B cell (primary cell): ENCODE measurements at regions of chr14 and their contacts with region 1.

Region 1: GRCh38 chr14:76151398-76152339 is at the start of gene GPATCH2L:
- DNase-seq: peak; percentile 96
- ATAC-seq: peak; percentile 95
- H3K4me3 ChIP-seq: peak within 1 kb of the TSS; percentile 62 to 96 (median 90)
- H3K4me3 Mint-ChIP-seq: peak within 1 kb of the TSS; percentile 98
- H3K27ac ChIP-seq: peak within 1 kb of the TSS; percentile 88 to 95
- H3K27ac Mint-ChIP-seq: peak within 1 kb of the TSS; percentile 97
- H3K4me1 ChIP-seq: peaks cover 30 to 31% of the 10 kb centered on the region in 2 donors
- H3K4me1 Mint-ChIP-seq: peaks cover 51% of the 10 kb centered on the region
- H3K27me3 ChIP-seq: no peaks in the 10 kb centered on the region
- H3K27me3 Mint-ChIP-seq: no peaks in the 10 kb centered on the region
- CTCF ChIP-seq: no peak
- total RNA-seq, gene GPATCH2L: 82.7 and 97.8 TPM in 2 replicates

Region 2: GRCh38 chr14:76109087-76109880 is 42.4 kb before region 1 on chr14:
- CTCF ChIA-PET with region 1: no interaction called
- POLR2A ChIA-PET with region 1: interaction called, 11 read pairs
- intact Hi-C with region 1: no loop called
- DNase-seq: no peak
- ATAC-seq: no peak
- H3K4me3 ChIP-seq: no peak overlapping the region
- H3K4me3 Mint-ChIP-seq: no peak overlapping the region
- H3K27ac ChIP-seq: no peak overlapping the region
- H3K27ac Mint-ChIP-seq: no peak overlapping the region
- H3K4me1 ChIP-seq: no peaks in the 10 kb centered on the region
- H3K4me1 Mint-ChIP-seq: no peaks in the 10 kb centered on the region
- H3K27me3 ChIP-seq: peaks cover 0 to 5% (median 2%) of the 10 kb centered on the region in 4 experiments
- H3K27me3 Mint-ChIP-seq: peaks cover 24% of the 10 kb centered on the region
- CTCF ChIP-seq: no peak

Region 3: GRCh38 chr14:76138758-76139723 is 12.6 kb before region 1 on chr14:
- CTCF ChIA-PET with region 1: no interaction called
- POLR2A ChIA-PET with region 1: no interaction called
- intact Hi-C with region 1: no loop called
- DNase-seq: no peak
- ATAC-seq: no peak
- H3K4me3 ChIP-seq: no peak overlapping the region
- H3K4me3 Mint-ChIP-seq: no peak overlapping the region
- H3K27ac ChIP-seq: no peak overlapping the region
- H3K27ac Mint-ChIP-seq: no peak overlapping the region
- H3K4me1 ChIP-seq: peaks cover 0 to 5% of the 10 kb centered on the region in 2 donors
- H3K4me1 Mint-ChIP-seq: peaks cover 10% of the 10 kb centered on the region
- H3K27me3 ChIP-seq: peaks cover 0 to 59% (median 37%) of the 10 kb centered on the region in 4 experiments
- H3K27me3 Mint-ChIP-seq: peaks cover 66% of the 10 kb centered on the region
- CTCF ChIP-seq: no peak